HCT116 (cell line): ENCODE measurements at regions of chr1 and their contacts with region 1.

Region 1: DNA sequence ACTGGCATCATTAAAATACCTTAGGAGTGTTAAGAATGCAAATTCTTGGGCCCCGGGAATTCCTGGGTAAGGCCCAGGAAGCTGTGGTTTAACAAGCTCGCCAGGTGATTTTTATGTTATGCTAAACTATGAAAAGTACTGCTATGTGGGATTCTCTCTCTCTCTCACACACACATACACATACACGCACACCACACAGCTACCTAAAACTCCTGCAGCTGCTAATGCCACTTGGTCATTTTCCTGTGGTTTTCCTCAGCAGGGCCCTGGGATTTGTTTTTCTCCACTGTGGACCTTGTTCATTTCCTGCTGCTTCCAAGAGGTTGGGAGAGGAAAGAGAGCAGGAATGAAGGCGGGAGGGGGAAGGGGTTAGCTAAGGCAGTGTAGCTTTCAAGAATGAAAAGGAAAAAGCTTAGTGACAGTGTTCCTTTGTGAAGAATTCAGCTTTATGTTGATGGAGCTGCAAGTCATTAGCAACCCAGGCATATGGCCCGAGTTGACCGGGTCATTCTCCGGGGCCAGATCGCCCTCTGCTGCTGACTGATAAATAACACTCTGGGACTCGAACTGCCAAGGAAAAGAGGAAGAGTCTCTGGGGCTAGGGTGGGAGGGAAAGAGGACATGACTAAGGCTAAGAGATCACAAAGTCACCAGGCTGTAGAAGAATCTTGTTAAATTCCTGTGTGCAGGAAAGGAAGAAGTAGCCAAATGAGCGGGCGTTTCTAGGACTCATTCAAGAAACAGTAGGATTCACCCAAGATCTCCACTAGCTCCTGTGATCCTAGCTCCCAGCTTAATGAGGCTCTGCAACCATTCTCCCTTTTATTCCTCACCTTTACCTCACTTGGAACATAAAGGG is 30.5 kb upstream of the LRIG2 start:
- DNase-seq: peak; percentile 36
- ATAC-seq: peak; percentile 97
- H3K4me3 ChIP-seq: no peak overlapping the region
- H3K27ac ChIP-seq: peak overlapping the region; percentile 2; the same call in 1 of the 2 replicates
- H3K4me1 ChIP-seq: peaks cover 9 to 17% of the 10 kb centered on the region in 2 experiments; a peak in 3 of 4 replicates
- H3K27me3 ChIP-seq: no peaks in the 10 kb centered on the region
- CTCF ChIP-seq: peak; percentile 51 to 88 (median 67); a peak in 5 of 6 replicates
- POLR2A ChIP-seq: no peak
- RAD21 ChIP-seq: peak; percentile 94

Region 2: DNA sequence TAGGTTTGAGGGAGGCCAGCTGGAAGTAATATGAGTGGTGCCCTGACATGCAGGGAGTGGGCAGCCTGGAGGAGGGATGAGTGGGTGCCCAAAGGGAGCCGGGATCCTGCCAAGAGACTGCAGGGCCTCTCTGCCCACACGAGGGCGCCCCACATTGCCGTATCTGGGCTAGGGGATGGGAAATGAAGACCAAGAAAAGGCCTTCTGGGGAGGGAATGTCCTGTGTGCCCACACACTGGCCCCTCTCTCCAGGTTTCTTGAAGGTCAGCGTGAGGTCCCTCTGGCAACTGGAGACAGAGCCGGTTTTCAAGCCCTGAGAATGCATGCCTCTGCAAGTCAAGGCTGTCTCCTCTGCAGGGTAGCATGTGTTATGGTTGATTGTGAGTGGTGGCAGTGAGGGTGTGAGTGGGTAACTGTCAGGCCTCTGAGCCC is 233.2 kb before region 1 on chr1:
- CTCF ChIA-PET with region 1: interaction called, 13 read pairs
- POLR2A ChIA-PET with region 1: interaction called, 3 read pairs
- RAD21 ChIA-PET with region 1: interaction called in 1 of 2 experiments, 3 read pairs
- intact Hi-C with region 1: loop called (anchors 1 kb)
- DNase-seq: peak; percentile 40
- ATAC-seq: peak; percentile 96
- H3K4me3 ChIP-seq: no peak overlapping the region
- H3K27ac ChIP-seq: no peak overlapping the region
- H3K4me1 ChIP-seq: peaks cover 0 to 4% of the 10 kb centered on the region in 2 experiments; a peak in 1 of 4 replicates
- H3K27me3 ChIP-seq: no peaks in the 10 kb centered on the region
- CTCF ChIP-seq: peak; percentile 89 to 97 (median 96)
- POLR2A ChIP-seq: no peak
- RAD21 ChIP-seq: peak; percentile 91

Region 3: GRCh38 chr1:112882271-112882744 is 160.2 kb before region 1 on chr1:
- CTCF ChIA-PET with region 1: interaction called, 46 read pairs
- POLR2A ChIA-PET with region 1: interaction called, 5 read pairs
- RAD21 ChIA-PET with region 1: interaction called in 1 of 2 experiments, 13 read pairs
- intact Hi-C with region 1: loop called (anchors 1 kb)
- DNase-seq: no peak
- ATAC-seq: no peak
- H3K4me3 ChIP-seq: no peak overlapping the region
- H3K27ac ChIP-seq: no peak overlapping the region
- H3K4me1 ChIP-seq: no peaks in the 10 kb centered on the region
- H3K27me3 ChIP-seq: no peaks in the 10 kb centered on the region
- CTCF ChIP-seq: no peak
- POLR2A ChIP-seq: no peak
- RAD21 ChIP-seq: no peak

Region 4: GRCh38 chr1:112935461-112936289 is 106.8 kb before region 1 on chr1:
- CTCF ChIA-PET with region 1: no interaction called
- POLR2A ChIA-PET with region 1: no interaction called
- RAD21 ChIA-PET with region 1: no interaction called
- intact Hi-C with region 1: no loop called
- DNase-seq: peak; percentile 26
- ATAC-seq: no peak
- H3K4me3 ChIP-seq: no peak overlapping the region
- H3K27ac ChIP-seq: peak overlapping the region; percentile 20; the same call in 1 of the 2 replicates
- H3K4me1 ChIP-seq: peaks cover 23 to 26% of the 10 kb centered on the region in 2 experiments
- H3K27me3 ChIP-seq: no peaks in the 10 kb centered on the region
- CTCF ChIP-seq: no peak
- POLR2A ChIP-seq: no peak
- RAD21 ChIP-seq: no peak

Region 5: GRCh38 chr1:113021430-113022086 is 21.0 kb before region 1 on chr1:
- CTCF ChIA-PET with region 1: no interaction called
- POLR2A ChIA-PET with region 1: no interaction called
- RAD21 ChIA-PET with region 1: no interaction called
- intact Hi-C with region 1: no loop called
- DNase-seq: no peak
- ATAC-seq: no peak
- H3K4me3 ChIP-seq: no peak overlapping the region
- H3K27ac ChIP-seq: no peak overlapping the region
- H3K4me1 ChIP-seq: no peaks in the 10 kb centered on the region
- H3K27me3 ChIP-seq: no peaks in the 10 kb centered on the region
- CTCF ChIP-seq: no peak
- POLR2A ChIP-seq: no peak
- RAD21 ChIP-seq: no peak